GM12878 (cell line): ENCODE measurements at regions of chr4 and their contacts with region 1.

Region 1: DNA sequence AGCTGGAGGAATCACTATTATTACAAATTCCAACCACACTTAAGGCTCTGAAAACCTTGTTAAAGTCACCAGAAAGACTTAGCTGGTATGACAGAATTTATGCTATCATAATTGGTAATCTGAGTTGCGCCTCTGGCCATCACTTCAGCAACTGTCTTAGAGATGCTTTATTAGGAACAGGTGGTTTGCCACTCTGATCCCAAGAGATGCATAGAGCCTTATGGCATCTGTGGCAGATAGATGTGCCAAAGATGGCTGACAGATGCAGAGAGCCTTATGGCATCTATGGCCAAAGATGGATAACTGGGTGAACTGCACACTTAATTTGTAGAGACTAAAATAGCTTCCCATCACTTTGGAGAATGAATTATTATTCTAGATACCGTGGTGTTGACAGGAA is 32.3 kb upstream of the PLAC8 start:
- DNase-seq: no peak
- ATAC-seq: no peak
- H3K4me3 ChIP-seq: no peak overlapping the region
- H3K27ac ChIP-seq: no peak overlapping the region
- H3K4me1 ChIP-seq: no peaks in the 10 kb centered on the region
- H3K27me3 ChIP-seq: no peaks in the 10 kb centered on the region
- CTCF ChIP-seq: no peak
- EP300 ChIP-seq: no peak
- POLR2A ChIP-seq: no peak
- RAD21 ChIP-seq: no peak

Region 2: DNA sequence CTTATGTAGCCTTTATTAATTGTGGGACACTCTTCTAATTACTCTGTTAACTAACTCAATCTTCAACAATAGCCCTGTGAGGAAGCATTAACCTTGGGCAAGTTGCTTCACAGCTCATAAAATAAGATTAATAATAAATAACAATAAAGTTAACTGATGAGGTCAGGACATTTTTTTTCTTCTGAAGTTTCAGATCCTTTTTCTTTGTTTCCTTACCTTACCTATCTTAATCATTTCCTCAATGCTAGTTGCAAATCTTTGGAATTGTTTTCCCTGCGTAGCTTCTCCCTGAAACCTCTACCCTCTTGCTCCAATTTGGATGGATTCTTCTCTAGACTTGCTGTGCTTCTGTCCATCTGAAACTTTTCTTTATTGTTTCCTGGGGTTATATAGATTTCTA is 14.8 kb before region 1 on chr4:
- CTCF ChIA-PET with region 1: no interaction called
- POLR2A ChIA-PET with region 1: interaction called, 5 read pairs
- RAD21 ChIA-PET with region 1: no interaction called
- SMC1A ChIA-PET with region 1: interaction called, 14 read pairs
- in situ Hi-C with region 1: no loop called
- intact Hi-C with region 1: no loop called
- DNase-seq: no peak
- ATAC-seq: peak; percentile 52
- H3K4me3 ChIP-seq: no peak overlapping the region
- H3K27ac ChIP-seq: no peak overlapping the region
- H3K4me1 ChIP-seq: peaks cover under 1% of the 10 kb centered on the region
- H3K27me3 ChIP-seq: no peaks in the 10 kb centered on the region
- CTCF ChIP-seq: no peak
- EP300 ChIP-seq: no peak
- POLR2A ChIP-seq: no peak
- RAD21 ChIP-seq: no peak